ENCODE measurements at regions of chr16 and their contacts with region 1.

Region 1: GRCh38 chr16:79770244-79771064 is 169.9 kb upstream of the MAF start:
- DNase-seq: peak; percentile 87 to 89
- H3K4me3 ChIP-seq: peak overlapping the region; percentile 53
- H3K4me1 ChIP-seq: peaks cover 12% of the 10 kb centered on the region
- H3K27me3 ChIP-seq: no peaks in the 10 kb centered on the region

Region 2: DNA sequence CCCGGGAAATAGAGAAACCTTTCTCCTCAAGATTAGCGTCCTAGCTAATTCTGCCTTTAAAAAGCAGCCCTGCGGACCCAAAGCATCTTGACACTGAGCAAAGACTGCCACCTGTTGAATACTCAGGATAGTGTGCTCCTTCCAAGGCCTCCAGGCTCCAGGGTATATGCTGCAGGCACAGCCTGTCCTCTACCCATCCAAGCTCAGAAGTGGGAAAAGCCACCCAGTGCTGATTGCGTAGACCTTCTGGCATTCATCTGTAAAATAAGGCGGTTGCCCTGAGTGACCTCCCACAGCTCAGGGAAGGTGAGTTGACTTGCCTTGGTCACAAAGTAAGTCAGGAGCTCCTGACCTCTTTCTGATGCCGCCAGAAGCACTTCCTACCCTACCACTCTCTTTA is 314.2 kb after region 1 on chr16:
- in situ Hi-C with region 1: loop called (anchors 25 kb)
- DNase-seq: peak; percentile 68
- H3K4me3 ChIP-seq: no peak overlapping the region
- H3K4me1 ChIP-seq: no peaks in the 10 kb centered on the region
- H3K27me3 ChIP-seq: no peaks in the 10 kb centered on the region